ENCODE measurements at regions of chr2 and their contacts with region 1.

Region 1: DNA sequence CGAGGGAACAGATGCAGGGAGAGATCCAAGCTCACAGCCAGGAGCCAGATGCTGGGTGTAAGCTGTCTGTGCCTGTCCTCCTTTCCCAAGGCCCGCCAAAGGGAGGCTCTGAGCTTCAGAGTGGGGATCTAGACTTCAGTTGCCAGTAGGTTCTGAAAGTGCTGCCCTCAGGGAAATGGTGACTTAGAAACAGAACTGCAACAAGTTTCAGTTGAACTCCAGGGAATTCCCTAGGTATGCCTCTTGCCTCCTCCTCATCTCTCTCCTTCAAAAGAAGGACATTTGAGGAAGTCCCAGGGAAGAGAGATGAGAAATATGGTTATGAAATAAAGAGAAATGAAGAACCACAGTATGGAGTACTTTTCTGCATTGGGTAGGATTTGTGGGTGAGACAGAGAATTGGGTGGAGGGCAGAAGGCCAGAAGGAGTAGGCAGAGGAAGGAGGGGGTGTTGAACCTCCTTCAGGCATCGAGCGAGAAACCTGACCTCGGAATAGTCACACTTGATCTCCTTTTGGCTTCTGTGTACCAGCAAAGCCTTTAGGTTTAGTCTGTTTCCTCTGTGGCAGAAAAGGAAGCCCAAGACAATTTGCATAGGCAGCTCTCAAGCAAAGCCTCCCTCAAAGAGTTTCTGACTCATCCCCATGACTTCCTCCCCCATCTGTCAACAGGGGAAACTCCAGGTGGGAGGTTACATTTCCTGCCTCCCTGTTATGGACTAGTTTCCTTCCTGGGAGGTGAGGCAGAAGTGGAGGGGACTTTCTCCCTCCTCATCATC is 45.7 kb downstream of the QPCT start:
- DNase-seq: no peak
- ATAC-seq: peak; percentile 79 to 90 (median 86)
- H3K4me3 ChIP-seq: no peak overlapping the region
- H3K27ac ChIP-seq: peak overlapping the region; percentile 80
- H3K4me1 ChIP-seq: peaks cover 14% of the 10 kb centered on the region
- H3K27me3 ChIP-seq: no peaks in the 10 kb centered on the region
- CTCF ChIP-seq: no peak

Region 2: DNA sequence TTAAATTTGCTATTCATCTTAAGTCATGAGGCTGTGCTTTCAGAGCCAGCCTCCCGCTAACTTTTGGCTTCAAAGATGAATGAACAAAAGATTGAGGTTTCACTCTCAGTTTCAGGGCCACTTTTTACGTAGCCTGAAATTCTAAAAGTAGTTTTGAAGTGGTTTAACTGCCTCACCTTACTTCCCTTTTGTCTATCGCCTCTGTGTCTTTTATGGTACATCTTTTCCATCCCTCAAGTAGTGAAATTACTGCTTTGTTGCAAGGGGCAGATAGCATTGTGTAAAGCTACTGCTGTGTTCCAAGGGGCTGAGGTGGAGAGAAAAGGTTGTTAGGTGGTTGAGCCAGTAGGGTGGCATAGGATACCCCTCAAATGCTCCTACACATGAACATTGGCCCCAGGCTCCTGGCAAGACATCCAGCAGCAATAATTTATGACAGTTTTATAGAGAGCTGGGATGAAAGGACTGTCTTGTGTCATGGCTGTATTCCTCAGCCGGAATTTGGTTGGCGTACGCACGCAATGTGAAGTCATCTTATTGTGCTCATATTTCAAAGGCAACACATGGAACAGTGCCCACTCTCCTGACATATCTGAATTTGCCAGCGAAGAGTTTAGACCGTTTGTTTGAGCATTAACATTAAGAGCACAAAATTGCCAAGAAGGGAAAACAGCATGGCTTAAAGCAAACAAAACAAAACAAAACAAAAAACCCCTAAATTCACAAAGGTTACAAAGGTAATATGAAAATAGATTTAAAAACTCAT is 13.6 kb before region 1 on chr2:
- intact Hi-C with region 1: no loop called
- DNase-seq: peak; percentile 63 to 85
- ATAC-seq: peak; percentile 88 to 94 (median 90)
- H3K4me3 ChIP-seq: peak overlapping the region; percentile 47
- H3K27ac ChIP-seq: peak overlapping the region; percentile 84
- H3K4me1 ChIP-seq: peaks cover 7% of the 10 kb centered on the region
- H3K27me3 ChIP-seq: no peaks in the 10 kb centered on the region
- CTCF ChIP-seq: no peak

Region 3: DNA sequence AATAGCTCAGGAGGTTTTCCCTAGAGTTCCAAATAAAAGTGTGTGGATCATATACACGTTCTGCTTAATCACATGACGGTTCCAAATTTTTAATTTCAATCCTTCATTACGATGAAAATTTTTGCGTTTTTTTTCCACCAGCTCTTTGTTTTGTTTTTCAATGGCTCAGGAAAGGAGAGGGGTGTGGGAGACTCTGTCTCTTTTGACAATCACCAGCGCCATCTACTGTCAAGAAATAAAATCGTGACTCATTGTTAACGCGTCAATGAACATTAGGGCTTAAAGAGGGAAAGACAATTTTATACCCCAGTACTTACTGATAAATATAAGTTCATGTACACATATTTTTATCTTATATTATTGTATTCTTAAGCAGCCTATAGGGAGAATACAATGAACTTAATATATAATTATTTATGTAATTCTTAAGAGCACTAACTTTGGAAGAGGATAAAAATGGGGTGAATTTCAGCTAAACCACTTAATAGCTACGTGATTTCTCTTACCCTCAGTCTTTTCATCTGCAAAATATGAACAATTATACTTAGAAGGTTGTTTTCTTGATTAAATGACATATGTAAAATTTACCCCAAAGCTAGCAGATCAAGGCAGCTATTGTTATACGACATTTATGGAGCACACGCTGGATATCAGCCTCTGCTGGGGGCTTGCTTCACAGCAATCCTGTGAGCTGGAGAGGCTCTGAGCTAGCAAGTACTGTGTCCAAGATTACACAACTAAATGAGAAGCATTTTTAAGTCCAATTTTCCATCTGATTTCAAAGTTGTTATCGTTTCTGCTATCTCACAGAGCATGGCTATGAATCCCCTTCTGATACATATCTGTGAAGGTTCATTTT is 487.5 kb after region 1 on chr2:
- intact Hi-C with region 1: loop called (anchors 5 kb)
- DNase-seq: no peak
- ATAC-seq: peak; percentile 78 to 95 (median 82)
- H3K4me3 ChIP-seq: no peak overlapping the region
- H3K27ac ChIP-seq: no peak overlapping the region
- H3K4me1 ChIP-seq: peaks cover 5% of the 10 kb centered on the region
- H3K27me3 ChIP-seq: peaks cover 0 to 2% (median 0%) of the 10 kb centered on the region in 3 donors
- CTCF ChIP-seq: peak; percentile 81